ENCODE measurements at regions of chr12 and their contacts with region 1.

Region 1: DNA sequence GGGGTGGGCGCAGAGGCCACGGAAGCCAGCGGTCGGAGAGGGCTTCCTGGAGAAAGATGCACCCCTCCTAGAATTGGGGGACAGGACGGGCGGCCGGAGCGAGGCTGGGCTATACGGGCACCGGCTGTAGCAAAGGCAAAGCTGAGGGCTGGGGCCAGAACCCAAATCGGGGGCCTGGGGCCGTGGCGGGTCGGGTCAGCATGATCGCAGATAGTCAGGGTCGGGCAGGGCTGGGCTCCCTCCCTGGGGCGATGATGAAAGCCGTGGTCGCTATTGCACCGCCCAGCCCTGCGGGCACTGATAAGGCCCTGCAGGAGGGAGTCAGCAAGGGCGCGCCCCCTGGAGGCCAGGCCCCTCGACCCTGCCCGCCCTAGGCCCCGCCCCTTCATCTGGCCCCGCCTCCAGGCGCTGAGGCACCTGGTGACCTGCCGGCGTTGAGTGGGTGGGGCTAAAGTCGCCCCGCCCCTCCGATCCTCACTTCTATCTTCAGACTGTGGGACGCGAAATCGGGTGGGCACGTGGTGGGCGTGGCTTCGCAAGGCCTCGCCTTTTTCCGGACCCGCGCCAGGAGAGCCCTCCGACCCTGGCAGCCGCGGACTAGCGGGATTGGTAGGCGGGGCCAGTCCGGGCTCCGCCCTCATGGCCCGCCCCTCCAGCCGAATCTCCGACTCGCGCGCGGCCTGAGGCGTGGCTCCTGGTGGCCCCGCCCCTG is 418 bp upstream of the SH2B3 start:
- DNase-seq: peak; percentile 93 to 95
- ATAC-seq: peak; percentile 80 to 90 (median 85)
- H3K4me3 ChIP-seq: peak overlapping the region; percentile 9 to 97 (median 88)
- H3K27ac ChIP-seq: peak overlapping the region; percentile 79 to 100 (median 98)
- H3K4me1 ChIP-seq: peaks cover 33 to 74% (median 67%) of the 10 kb centered on the region in 9 donors
- H3K27me3 ChIP-seq: no peaks in the 10 kb centered on the region
- CTCF ChIP-seq: peak in 8 of 9 donors; percentile 62 to 83 (median 79)

Region 2: GRCh38 chr12:111339321-111339938 is 65.9 kb before region 1 on chr12:
- intact Hi-C with region 1: no loop called
- DNase-seq: no peak
- ATAC-seq: no peak
- H3K4me3 ChIP-seq: no peak overlapping the region
- H3K27ac ChIP-seq: no peak overlapping the region
- H3K4me1 ChIP-seq: no peaks in the 10 kb centered on the region
- H3K27me3 ChIP-seq: no peaks in the 10 kb centered on the region
- CTCF ChIP-seq: no peak

Region 3: GRCh38 chr12:111424793-111425251 is 19.5 kb after region 1 on chr12:
- intact Hi-C with region 1: loop called in 2 of 10 experiments (anchors 2 kb)
- DNase-seq: no peak
- ATAC-seq: peak in 7 of 8 donors; percentile 5 to 43 (median 22)
- H3K4me3 ChIP-seq: no peak overlapping the region
- H3K27ac ChIP-seq: peak overlapping the region; percentile 51 to 93 (median 90)
- H3K4me1 ChIP-seq: peaks cover 43 to 99% (median 84%) of the 10 kb centered on the region in 9 donors
- H3K27me3 ChIP-seq: no peaks in the 10 kb centered on the region
- CTCF ChIP-seq: peak in 6 of 9 donors; percentile 16 to 34 (median 24)

Region 4: GRCh38 chr12:111444925-111445725 is 39.8 kb after region 1 on chr12:
- intact Hi-C with region 1: loop called in 6 of 10 experiments (anchors 2 to 5 kb)
- DNase-seq: peak; percentile 65 to 80
- ATAC-seq: peak; percentile 60 to 81 (median 68)
- H3K4me3 ChIP-seq: peak overlapping the region in 2 of 10 donors; percentile 2 to 7
- H3K27ac ChIP-seq: peak overlapping the region; percentile 28 to 93 (median 76)
- H3K4me1 ChIP-seq: peaks cover 32 to 100% (median 99%) of the 10 kb centered on the region in 9 donors
- H3K27me3 ChIP-seq: no peaks in the 10 kb centered on the region
- CTCF ChIP-seq: peak in 2 of 9 donors; percentile 25 to 27